ENCODE measurements at regions of chr11 and their contacts with region 1.

Region 1: GRCh38 chr11:94493281-94494125 is at the starts of genes ANKRD49 and MRE11:
- DNase-seq: peak; percentile 98
- ATAC-seq: peak; percentile 100
- H3K4me3 ChIP-seq: peak within 1 kb of the TSS; percentile 73 to 99 (median 95)
- H3K4me3 Mint-ChIP-seq: peak within 1 kb of the TSS; percentile 95
- H3K27ac ChIP-seq: peak within 1 kb of the TSS; percentile 85 to 92
- H3K27ac Mint-ChIP-seq: peak within 1 kb of the TSS; percentile 94
- H3K4me1 ChIP-seq: peaks cover 13 to 26% of the 10 kb centered on the region in 2 donors
- H3K4me1 Mint-ChIP-seq: peaks cover 32% of the 10 kb centered on the region
- H3K27me3 ChIP-seq: no peaks in the 10 kb centered on the region
- H3K27me3 Mint-ChIP-seq: no peaks in the 10 kb centered on the region
- CTCF ChIP-seq: no peak
- total RNA-seq, gene ANKRD49: 51.4 and 52.0 TPM in 2 replicates
- total RNA-seq, gene MRE11: 53.5 and 54.0 TPM in 2 replicates

Region 2: GRCh38 chr11:93662177-93662575 is 831.3 kb before region 1 on chr11:
- CTCF ChIA-PET with region 1: no interaction called
- POLR2A ChIA-PET with region 1: no interaction called
- intact Hi-C with region 1: loop called (anchors 5 kb)
- DNase-seq: no peak
- ATAC-seq: no peak
- H3K4me3 ChIP-seq: peak overlapping the region; percentile 81 to 100 (median 97)
- H3K4me3 Mint-ChIP-seq: peak overlapping the region; percentile 85
- H3K27ac ChIP-seq: peak overlapping the region; percentile 87 to 91
- H3K27ac Mint-ChIP-seq: peak overlapping the region; percentile 77
- H3K4me1 ChIP-seq: peaks cover 7 to 16% of the 10 kb centered on the region in 2 donors
- H3K4me1 Mint-ChIP-seq: peaks cover 19% of the 10 kb centered on the region
- H3K27me3 ChIP-seq: no peaks in the 10 kb centered on the region
- H3K27me3 Mint-ChIP-seq: no peaks in the 10 kb centered on the region
- CTCF ChIP-seq: no peak

Region 3: GRCh38 chr11:93784152-93784934 is 709.2 kb before region 1 on chr11 and contains the start of gene MED17:
- CTCF ChIA-PET with region 1: no interaction called
- POLR2A ChIA-PET with region 1: no interaction called
- intact Hi-C with region 1: loop called (anchors 1 kb)
- DNase-seq: peak; percentile 89
- ATAC-seq: peak; percentile 94
- H3K4me3 ChIP-seq: peak within 1 kb of the TSS; percentile 71 to 99 (median 85)
- H3K4me3 Mint-ChIP-seq: peak within 1 kb of the TSS; percentile 97
- H3K27ac ChIP-seq: peak within 1 kb of the TSS; percentile 82 to 91
- H3K27ac Mint-ChIP-seq: peak within 1 kb of the TSS; percentile 92
- H3K4me1 ChIP-seq: peaks cover 26 to 29% of the 10 kb centered on the region in 2 donors
- H3K4me1 Mint-ChIP-seq: peaks cover 40% of the 10 kb centered on the region
- H3K27me3 ChIP-seq: no peaks in the 10 kb centered on the region
- H3K27me3 Mint-ChIP-seq: no peaks in the 10 kb centered on the region
- CTCF ChIP-seq: peak; percentile 57
- total RNA-seq, gene MED17: 78.1 and 82.7 TPM in 2 replicates

Region 4: DNA sequence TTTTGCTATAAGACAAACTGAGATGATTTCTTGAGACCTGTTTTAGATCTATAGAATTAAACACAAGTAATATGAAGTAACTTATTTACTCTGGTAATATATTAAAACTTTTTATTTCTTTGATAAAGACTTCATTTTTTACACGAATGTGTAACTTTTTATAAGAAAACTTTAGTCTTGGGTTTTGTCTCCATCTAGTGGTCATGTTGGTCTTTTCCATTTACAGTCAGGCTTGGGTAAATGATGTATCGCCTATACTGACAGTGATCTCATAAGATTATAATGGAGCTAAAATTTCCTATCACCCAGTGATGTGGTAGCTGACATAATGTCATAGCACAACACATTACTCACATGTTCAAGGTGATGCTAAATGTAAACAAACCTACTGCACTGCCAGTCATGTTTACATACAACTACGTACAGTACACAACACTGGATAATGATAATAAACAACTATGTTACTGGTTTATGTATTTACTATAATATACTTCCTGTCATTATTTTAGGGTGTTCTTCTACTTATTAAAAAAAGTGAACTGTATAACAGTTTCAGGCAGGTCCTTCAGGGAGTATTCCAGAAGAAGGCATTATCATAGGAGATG is 11.3 kb after region 1 on chr11:
- CTCF ChIA-PET with region 1: interaction called, 10 read pairs
- POLR2A ChIA-PET with region 1: no interaction called
- intact Hi-C with region 1: no loop called
- DNase-seq: peak; percentile 64
- ATAC-seq: peak; percentile 33
- H3K4me3 ChIP-seq: no peak overlapping the region
- H3K4me3 Mint-ChIP-seq: no peak overlapping the region
- H3K27ac ChIP-seq: no peak overlapping the region
- H3K27ac Mint-ChIP-seq: no peak overlapping the region
- H3K4me1 ChIP-seq: no peaks in the 10 kb centered on the region
- H3K4me1 Mint-ChIP-seq: no peaks in the 10 kb centered on the region
- H3K27me3 ChIP-seq: no peaks in the 10 kb centered on the region
- H3K27me3 Mint-ChIP-seq: peaks cover 3% of the 10 kb centered on the region
- CTCF ChIP-seq: peak; percentile 88

Region 5: GRCh38 chr11:94515398-94515797 is 21.9 kb after region 1 on chr11:
- CTCF ChIA-PET with region 1: no interaction called
- POLR2A ChIA-PET with region 1: no interaction called
- intact Hi-C with region 1: no loop called
- DNase-seq: no peak
- ATAC-seq: no peak
- H3K4me3 ChIP-seq: no peak overlapping the region
- H3K4me3 Mint-ChIP-seq: no peak overlapping the region
- H3K27ac ChIP-seq: no peak overlapping the region
- H3K27ac Mint-ChIP-seq: no peak overlapping the region
- H3K4me1 ChIP-seq: peaks cover 11% of the 10 kb centered on the region in 2 donors
- H3K4me1 Mint-ChIP-seq: peaks cover 15% of the 10 kb centered on the region
- H3K27me3 ChIP-seq: peaks cover 0 to 23% (median 11%) of the 10 kb centered on the region in 4 experiments
- H3K27me3 Mint-ChIP-seq: peaks cover 54% of the 10 kb centered on the region
- CTCF ChIP-seq: no peak

Region 6: GRCh38 chr11:94973099-94973968 is 479.8 kb after region 1 on chr11 and contains the starts of genes CWC15 and KDM4D:
- CTCF ChIA-PET with region 1: no interaction called
- POLR2A ChIA-PET with region 1: no interaction called
- intact Hi-C with region 1: loop called (anchors 1 kb)
- DNase-seq: peak; percentile 94
- ATAC-seq: peak; percentile 100
- H3K4me3 ChIP-seq: peak within 1 kb of the TSS; percentile 75 to 97 (median 87)
- H3K4me3 Mint-ChIP-seq: peak within 1 kb of the TSS; percentile 92
- H3K27ac ChIP-seq: peak within 1 kb of the TSS; percentile 74 to 83
- H3K27ac Mint-ChIP-seq: peak within 1 kb of the TSS; percentile 94
- H3K4me1 ChIP-seq: peaks cover 10 to 14% of the 10 kb centered on the region in 2 donors
- H3K4me1 Mint-ChIP-seq: peaks cover 13% of the 10 kb centered on the region
- H3K27me3 ChIP-seq: no peaks in the 10 kb centered on the region
- H3K27me3 Mint-ChIP-seq: no peaks in the 10 kb centered on the region
- CTCF ChIP-seq: no peak
- total RNA-seq, gene CWC15: 59.5 and 59.8 TPM in 2 replicates
- total RNA-seq, gene KDM4D: 0.44 and 0.73 TPM in 2 replicates

Region 7: DNA sequence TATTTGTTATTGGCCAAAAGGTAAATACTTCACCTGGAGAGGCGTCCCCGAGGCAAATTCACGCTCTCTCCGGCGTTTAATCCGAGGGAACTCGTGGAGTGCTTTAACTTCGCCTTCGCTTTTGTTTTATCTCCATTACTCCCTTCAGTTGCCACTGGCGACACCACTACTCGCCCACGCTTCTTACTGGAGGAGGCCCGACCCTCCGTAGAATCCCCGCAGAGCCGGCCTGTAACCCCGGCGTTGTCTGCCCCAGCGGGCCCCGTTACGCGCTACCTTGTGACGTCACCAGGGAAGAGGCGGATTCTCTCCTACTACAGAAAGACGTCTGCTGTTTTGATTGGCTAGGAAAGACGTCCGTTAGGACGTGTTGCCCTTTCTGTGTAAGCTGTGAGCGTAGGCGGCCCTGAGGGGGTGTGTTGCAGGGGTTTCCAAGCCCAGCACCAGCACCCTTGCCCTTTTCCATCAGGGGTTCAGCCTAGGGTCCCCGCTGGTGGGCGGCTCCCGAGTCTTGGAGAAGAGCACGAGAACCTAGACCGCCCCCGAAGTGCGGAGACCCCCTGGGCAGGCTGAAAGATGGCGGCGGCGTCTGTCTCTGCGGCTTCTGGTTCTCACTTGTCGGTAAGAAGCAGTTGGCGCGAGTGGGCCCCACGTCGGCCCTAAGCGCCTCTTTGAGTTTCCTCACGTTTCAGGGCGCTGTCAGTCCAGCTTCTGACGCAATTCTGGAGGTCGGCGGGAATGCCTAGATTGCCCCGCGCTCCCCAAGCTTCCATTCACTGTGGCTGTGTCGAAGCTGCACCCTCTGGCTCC is 1296.8 kb after region 1 on chr11 and contains the start of gene CEP57:
- CTCF ChIA-PET with region 1: no interaction called
- POLR2A ChIA-PET with region 1: interaction called, 3 read pairs
- intact Hi-C with region 1: loop called (anchors 1 kb)
- DNase-seq: peak; percentile 98
- ATAC-seq: peak; percentile 63
- H3K4me3 ChIP-seq: peak within 1 kb of the TSS; percentile 73 to 99 (median 96)
- H3K4me3 Mint-ChIP-seq: peak within 1 kb of the TSS; percentile 97
- H3K27ac ChIP-seq: peak within 1 kb of the TSS; percentile 98 to 100
- H3K27ac Mint-ChIP-seq: peak within 1 kb of the TSS; percentile 99
- H3K4me1 ChIP-seq: peaks cover 20% of the 10 kb centered on the region in 2 donors
- H3K4me1 Mint-ChIP-seq: peaks cover 51% of the 10 kb centered on the region
- H3K27me3 ChIP-seq: no peaks in the 10 kb centered on the region
- H3K27me3 Mint-ChIP-seq: no peaks in the 10 kb centered on the region
- CTCF ChIP-seq: no peak
- total RNA-seq, gene CEP57: 78.1 and 82.9 TPM in 2 replicates

Measured in B cell (primary cell).